ENCODE measurements at regions of chr4 and their contacts with region 1.

Region 1: DNA sequence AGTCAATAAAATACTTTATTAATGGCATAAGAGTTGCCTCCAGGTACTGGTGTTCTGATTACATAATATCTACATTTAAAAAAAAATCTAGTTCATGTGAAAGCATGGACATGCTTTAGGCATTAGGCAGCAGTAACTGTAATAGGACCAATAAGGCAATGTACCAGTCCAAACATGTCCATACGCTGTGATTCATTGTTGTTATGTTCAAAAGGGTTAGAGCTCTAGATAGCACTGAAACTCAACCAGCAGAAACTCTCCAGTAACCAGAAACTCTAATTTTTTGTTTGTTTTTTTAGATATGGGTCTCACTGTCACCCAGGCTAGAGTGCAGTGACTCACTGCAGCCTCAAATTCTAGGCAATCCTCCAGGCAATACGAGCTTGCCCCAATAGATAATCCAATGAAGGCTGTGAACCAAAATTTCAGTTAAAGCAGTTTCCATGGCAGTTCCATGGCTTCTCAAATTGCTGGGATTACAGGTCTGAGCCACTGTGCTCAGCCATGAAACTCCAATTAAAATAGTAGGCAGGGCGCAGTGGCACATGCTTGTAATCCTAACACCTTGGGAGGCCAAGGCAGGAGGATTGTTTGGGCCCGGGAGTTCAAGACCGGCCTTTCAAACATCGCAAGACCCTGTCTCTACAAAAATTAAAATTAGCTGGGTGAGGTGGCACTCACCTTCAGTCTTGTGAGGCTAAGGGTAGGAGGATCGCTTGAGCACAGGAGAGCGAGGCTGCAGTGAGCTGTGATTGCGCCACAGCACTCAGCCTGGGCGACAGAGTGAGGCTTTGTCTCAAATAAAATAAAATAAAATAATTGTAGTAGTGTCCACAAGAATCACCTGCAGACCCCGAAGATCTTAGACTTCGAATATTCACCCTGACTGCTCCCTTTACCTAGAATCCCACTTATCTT is 36.3 kb downstream of the MGARP start:
- DNase-seq: no peak
- ATAC-seq: no peak
- H3K4me3 ChIP-seq: no peak overlapping the region
- H3K4me3 Mint-ChIP-seq: no peak overlapping the region
- H3K27ac ChIP-seq: no peak overlapping the region
- H3K27ac Mint-ChIP-seq: no peak overlapping the region
- H3K4me1 ChIP-seq: no peaks in the 10 kb centered on the region
- H3K4me1 Mint-ChIP-seq: no peaks in the 10 kb centered on the region
- H3K27me3 ChIP-seq: no peaks in the 10 kb centered on the region
- H3K27me3 Mint-ChIP-seq: no peaks in the 10 kb centered on the region
- CTCF ChIP-seq: no peak

Region 2: GRCh38 chr4:139279760-139280620 is 36.3 kb after region 1 on chr4 and contains the start of gene MGARP:
- CTCF ChIA-PET with region 1: no interaction called
- POLR2A ChIA-PET with region 1: no interaction called
- intact Hi-C with region 1: loop called in 1 of 2 experiments (anchors 5 kb)
- DNase-seq: peak in 5 of 14 experiments; percentile 20 to 42 (median 36)
- ATAC-seq: peak; percentile 59
- H3K4me3 ChIP-seq: peak within 1 kb of the TSS; percentile 48
- H3K4me3 Mint-ChIP-seq: peak within 1 kb of the TSS; percentile 77
- H3K27ac ChIP-seq: no peak within 1 kb of the TSS
- H3K27ac Mint-ChIP-seq: no peak within 1 kb of the TSS
- H3K4me1 ChIP-seq: peaks cover 21% of the 10 kb centered on the region
- H3K4me1 Mint-ChIP-seq: peaks cover 18% of the 10 kb centered on the region
- H3K27me3 ChIP-seq: peaks cover 22 to 48% of the 10 kb centered on the region in 2 experiments
- H3K27me3 Mint-ChIP-seq: peaks cover 56% of the 10 kb centered on the region
- CTCF ChIP-seq: no peak
- total RNA-seq, gene MGARP: not detected

Measured in CD4-positive, alpha-beta T cell (primary cell).